PC-9 (cell line): ENCODE measurements at regions of chr18 and their contacts with region 1.

Region 1: DNA sequence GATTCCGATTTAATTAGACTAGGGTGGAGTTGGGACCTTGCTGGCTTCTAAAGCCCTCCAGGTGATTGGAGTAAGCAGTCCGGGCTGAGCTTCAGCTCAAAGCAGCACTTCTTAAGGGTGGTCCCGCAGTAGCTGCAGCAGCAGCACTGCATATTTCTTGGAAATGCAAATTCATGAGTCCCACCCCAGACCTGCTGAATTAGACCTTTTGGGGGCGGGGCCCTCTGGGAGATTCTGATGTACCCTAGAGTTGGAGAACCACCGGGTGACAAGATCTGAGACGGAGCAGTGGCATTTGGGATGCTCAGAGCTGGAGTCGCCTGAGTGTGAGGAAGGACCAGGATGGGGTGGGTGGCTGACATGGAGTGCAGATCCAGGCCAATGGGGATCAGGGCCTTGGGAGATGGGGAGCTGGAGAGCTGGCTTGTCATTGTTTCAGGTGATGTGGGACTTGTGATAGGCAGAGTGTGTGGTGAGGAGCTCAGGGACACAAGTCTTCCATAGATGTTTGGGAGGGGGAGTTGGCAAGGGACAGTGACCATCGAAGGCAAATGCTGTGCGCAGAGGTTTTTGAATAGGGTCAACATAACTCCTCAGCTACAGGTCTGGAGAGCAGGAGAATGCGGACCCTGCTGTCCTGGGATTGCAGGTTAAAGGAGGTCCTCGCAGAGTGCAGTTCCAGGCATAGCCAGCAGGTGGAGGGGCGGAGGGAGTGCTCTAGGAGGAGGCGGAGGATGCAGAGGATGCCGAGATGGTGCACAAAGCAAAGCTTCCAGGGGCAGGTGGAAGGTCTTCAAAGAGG is 130.9 kb upstream of the RAB12 start:
- DNase-seq: peak in 1 of 2 experiments; percentile 62
- H3K4me3 ChIP-seq: no peak overlapping the region
- H3K27ac ChIP-seq: no peak overlapping the region
- H3K4me1 ChIP-seq: no peaks in the 10 kb centered on the region
- H3K27me3 ChIP-seq: no peaks in the 10 kb centered on the region; the same call in 1 of the 2 replicates
- CTCF ChIP-seq: peak; percentile 94

Region 2: DNA sequence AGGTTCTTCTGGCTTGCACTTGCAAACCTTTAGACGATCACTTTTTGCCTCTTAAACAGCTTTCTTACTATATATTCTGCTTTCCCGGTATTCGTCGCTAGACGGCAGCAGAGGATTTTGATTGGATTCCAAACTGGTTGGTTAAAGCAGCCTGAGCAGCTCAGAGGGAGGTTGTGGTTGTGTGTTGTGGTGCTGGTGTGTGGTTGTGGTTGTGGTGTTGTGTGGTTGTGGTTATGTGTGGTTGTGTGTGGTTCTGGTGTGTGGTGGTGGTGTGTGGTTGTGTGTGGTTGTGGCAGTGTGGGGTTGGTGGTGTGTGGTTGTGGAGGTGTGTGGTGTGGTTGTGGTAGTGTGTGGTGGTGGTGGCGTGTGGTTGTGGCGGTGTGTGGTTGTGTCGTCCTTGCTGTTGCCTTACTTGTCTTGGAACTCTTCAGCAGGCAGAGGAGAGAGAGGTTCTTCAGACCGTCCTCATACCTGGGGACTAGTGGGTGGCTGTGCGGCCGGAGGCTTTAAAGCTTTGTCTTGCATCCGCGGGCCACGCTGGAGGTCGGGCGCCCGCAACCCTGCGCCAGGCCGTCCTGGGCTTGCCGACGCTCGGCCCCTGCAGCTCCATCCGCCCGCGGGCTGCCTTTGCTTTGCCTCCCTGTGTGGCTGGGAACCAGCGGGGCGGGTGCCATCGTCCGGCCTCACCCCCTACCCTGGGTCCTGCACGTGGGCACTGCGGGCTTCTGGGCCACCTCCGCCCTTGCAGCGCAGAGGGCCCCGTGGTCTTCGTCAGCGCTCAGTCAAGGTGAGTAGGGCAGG is 1558.1 kb before region 1 on chr18:
- CTCF ChIA-PET with region 1: interaction called, 10 read pairs
- POLR2A ChIA-PET with region 1: no interaction called
- intact Hi-C with region 1: no loop called
- DNase-seq: peak; percentile 34 to 43
- H3K4me3 ChIP-seq: no peak overlapping the region
- H3K27ac ChIP-seq: no peak overlapping the region
- H3K4me1 ChIP-seq: no peaks in the 10 kb centered on the region
- H3K27me3 ChIP-seq: peaks cover 27% of the 10 kb centered on the region
- CTCF ChIP-seq: peak; percentile 81

Region 3: GRCh38 chr18:7272311-7273049 is 1205.9 kb before region 1 on chr18:
- CTCF ChIA-PET with region 1: interaction called, 3 read pairs
- POLR2A ChIA-PET with region 1: interaction called, 3 read pairs
- intact Hi-C with region 1: loop called (anchors 1 kb)
- DNase-seq: peak; percentile 39 to 50
- H3K4me3 ChIP-seq: no peak overlapping the region
- H3K27ac ChIP-seq: no peak overlapping the region
- H3K4me1 ChIP-seq: no peaks in the 10 kb centered on the region
- H3K27me3 ChIP-seq: peaks cover 11% of the 10 kb centered on the region
- CTCF ChIP-seq: peak; percentile 67

Region 4: GRCh38 chr18:7789856-7790552 is 688.4 kb before region 1 on chr18:
- CTCF ChIA-PET with region 1: no interaction called
- POLR2A ChIA-PET with region 1: no interaction called
- intact Hi-C with region 1: loop called (anchors 2 kb)
- DNase-seq: peak in 1 of 2 experiments; percentile 25
- H3K4me3 ChIP-seq: no peak overlapping the region
- H3K27ac ChIP-seq: no peak overlapping the region
- H3K4me1 ChIP-seq: no peaks in the 10 kb centered on the region
- H3K27me3 ChIP-seq: no peaks in the 10 kb centered on the region
- CTCF ChIP-seq: peak; percentile 82

Region 5: GRCh38 chr18:8426401-8426800 is 52.0 kb before region 1 on chr18:
- CTCF ChIA-PET with region 1: no interaction called
- POLR2A ChIA-PET with region 1: no interaction called
- intact Hi-C with region 1: loop called (anchors 10 kb)
- DNase-seq: no peak
- H3K4me3 ChIP-seq: no peak overlapping the region
- H3K27ac ChIP-seq: no peak overlapping the region
- H3K4me1 ChIP-seq: peaks cover 15% of the 10 kb centered on the region
- H3K27me3 ChIP-seq: no peaks in the 10 kb centered on the region
- CTCF ChIP-seq: peak; percentile 57